Vagina (tissue), 2 donors: ENCODE measurements at regions of chr6 and their contacts with region 1.

Region 1: GRCh38 chr6:83615025-83615999 is 93.6 kb downstream of the SNAP91 start:
- DNase-seq: no peak
- H3K4me3 ChIP-seq: no peak overlapping the region
- H3K27ac ChIP-seq: no peak overlapping the region
- H3K4me1 ChIP-seq: no peaks in the 10 kb centered on the region
- H3K27me3 ChIP-seq: no peaks in the 10 kb centered on the region
- CTCF ChIP-seq: peak in 1 of 3 experiments; percentile 22
- POLR2A ChIP-seq: no peak

Region 2: GRCh38 chr6:82080767-82081166 is 1534.5 kb before region 1 on chr6:
- intact Hi-C with region 1: loop called (anchors 5 kb)
- DNase-seq: no peak
- H3K4me3 ChIP-seq: no peak overlapping the region
- H3K27ac ChIP-seq: no peak overlapping the region
- H3K4me1 ChIP-seq: no peaks in the 10 kb centered on the region
- H3K27me3 ChIP-seq: no peaks in the 10 kb centered on the region
- CTCF ChIP-seq: no peak
- POLR2A ChIP-seq: no peak

Region 3: GRCh38 chr6:83341765-83342164 is 273.5 kb before region 1 on chr6:
- intact Hi-C with region 1: no loop called
- DNase-seq: no peak
- H3K4me3 ChIP-seq: no peak overlapping the region
- H3K27ac ChIP-seq: no peak overlapping the region
- H3K4me1 ChIP-seq: no peaks in the 10 kb centered on the region
- H3K27me3 ChIP-seq: no peaks in the 10 kb centered on the region
- CTCF ChIP-seq: no peak
- POLR2A ChIP-seq: no peak

Region 4: GRCh38 chr6:84093441-84094435 is 478.4 kb after region 1 on chr6:
- intact Hi-C with region 1: no loop called
- DNase-seq: no peak
- H3K4me3 ChIP-seq: no peak overlapping the region
- H3K27ac ChIP-seq: no peak overlapping the region
- H3K4me1 ChIP-seq: no peaks in the 10 kb centered on the region
- H3K27me3 ChIP-seq: no peaks in the 10 kb centered on the region
- CTCF ChIP-seq: no peak
- POLR2A ChIP-seq: no peak